ENCODE measurements at regions of chr6 and their contacts with region 1.

Region 1: DNA sequence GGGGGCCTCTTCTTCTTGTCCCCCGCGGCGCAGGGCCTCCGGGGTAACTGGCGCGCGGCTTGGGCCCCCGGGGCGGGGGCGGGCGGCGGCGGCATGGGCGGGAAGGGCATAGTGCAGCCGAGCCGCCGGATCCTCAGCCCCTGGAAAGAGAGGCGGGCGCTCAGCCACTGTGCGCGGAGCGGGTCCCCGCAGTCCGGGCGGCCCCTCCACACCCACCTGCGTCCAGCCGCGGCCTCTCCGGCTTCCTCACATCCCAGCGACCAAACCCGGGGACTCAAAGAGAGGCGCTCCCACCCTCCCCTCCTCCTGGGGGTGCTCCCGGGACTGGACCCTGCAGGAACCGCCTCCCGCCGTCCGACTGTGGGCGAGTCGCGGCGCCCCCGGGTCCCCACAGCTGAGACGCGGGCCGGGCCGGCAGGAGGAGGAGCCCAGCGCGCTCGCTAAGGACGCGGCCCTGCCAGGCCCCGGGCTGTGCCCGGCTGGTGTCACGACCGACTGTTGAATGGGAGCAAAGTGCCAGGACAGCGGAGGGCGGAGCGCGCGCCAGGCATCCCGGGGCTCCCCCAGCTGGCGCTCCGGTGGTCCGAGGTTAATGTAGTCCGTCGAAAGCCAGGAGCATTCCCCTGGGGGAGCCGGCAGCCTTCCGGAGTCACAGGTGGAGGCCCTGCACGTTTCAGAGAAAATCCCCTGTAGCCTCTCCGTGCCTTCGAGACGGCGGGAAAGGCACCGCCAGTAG is at the start of gene PRR18:
- DNase-seq: peak in 1 of 2 experiments; percentile 72
- H3K4me3 ChIP-seq: peak within 1 kb of the TSS; percentile 22 to 60 (median 44)
- H3K27ac ChIP-seq: no peak within 1 kb of the TSS
- H3K4me1 ChIP-seq: peaks cover 0 to 10% (median 4%) of the 10 kb centered on the region in 4 experiments; a peak in 4 of 7 replicates
- H3K27me3 ChIP-seq: peaks cover 24 to 54% (median 48%) of the 10 kb centered on the region in 4 experiments
- CTCF ChIP-seq: no peak
- EP300 ChIP-seq: no peak
- POLR2A ChIP-seq: no peak
- RAD21 ChIP-seq: no peak
- total RNA-seq, gene PRR18: 0.19 and 0.23 TPM in 2 replicates

Region 2: DNA sequence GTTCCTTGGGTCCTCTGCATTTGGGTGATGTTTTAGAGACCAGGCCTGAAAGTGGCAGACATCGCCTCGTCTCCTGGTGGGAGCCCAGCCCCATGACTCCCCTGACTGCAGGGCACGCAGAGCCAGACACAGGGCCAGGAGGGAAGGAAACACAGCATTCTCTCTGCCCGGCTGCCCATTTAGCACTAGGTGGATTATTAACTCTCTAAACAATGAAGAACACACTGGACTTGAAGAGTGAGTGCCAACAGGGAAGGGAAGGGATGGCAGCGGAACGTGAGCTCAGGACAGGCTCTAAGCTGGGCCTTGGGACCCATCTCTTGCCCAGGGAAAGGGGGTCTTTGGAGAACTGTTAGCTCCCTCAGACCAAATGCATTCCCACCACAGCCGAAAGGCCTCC is 221.0 kb before region 1 on chr6:
- CTCF ChIA-PET with region 1: no interaction called
- POLR2A ChIA-PET with region 1: no interaction called
- DNase-seq: no peak
- H3K4me3 ChIP-seq: no peak overlapping the region
- H3K27ac ChIP-seq: no peak overlapping the region
- H3K4me1 ChIP-seq: no peaks in the 10 kb centered on the region
- H3K27me3 ChIP-seq: peaks cover 0 to 4% (median 0%) of the 10 kb centered on the region in 4 experiments; a peak in 1 of 7 replicates
- CTCF ChIP-seq: no peak
- EP300 ChIP-seq: no peak
- POLR2A ChIP-seq: no peak
- RAD21 ChIP-seq: no peak

Region 3: DNA sequence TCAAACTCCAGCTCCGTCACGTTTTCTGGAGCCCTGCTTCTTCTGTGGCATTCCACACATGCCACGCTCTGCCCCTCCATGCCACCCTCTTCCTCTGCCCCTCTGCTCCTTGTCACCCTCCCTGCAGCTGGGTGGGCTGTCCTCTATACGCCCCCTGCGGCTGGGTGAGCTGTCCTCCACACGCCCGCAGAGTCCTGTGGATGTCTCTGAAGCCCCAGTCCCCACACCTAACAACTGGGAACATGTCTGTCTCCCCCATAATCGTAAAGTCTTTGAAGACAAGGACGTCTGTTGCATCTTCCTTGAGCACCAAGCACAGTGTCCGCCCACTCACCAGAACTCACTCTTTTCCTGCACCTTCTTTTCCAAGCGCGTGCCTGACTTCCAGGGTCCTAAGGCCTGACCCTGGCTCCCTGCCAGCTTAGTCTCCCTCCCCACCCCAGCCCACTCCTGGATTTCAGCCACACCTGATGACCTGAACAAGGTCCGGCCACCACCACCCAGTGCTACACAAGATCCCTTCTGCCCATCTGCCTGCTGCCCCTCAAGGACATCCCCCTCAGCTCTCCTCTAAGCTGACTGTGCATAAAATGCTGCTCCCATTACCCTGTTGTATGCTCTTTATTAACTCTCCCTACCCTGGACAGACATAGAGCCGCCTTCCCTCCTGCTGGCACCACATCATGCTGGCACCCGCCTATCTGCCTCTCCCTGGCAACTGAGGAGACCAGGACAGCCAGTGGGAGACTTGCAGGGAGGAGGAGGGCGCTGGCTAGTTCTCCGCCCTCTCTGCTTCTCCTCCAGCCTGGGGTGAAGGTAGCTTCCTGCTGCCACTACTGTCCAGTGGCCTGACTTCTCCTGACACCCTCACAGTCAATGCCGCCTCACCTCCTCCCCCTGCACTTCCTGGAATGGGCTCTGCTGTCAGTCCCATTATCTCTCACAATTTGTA is 10.7 kb after region 1 on chr6:
- CTCF ChIA-PET with region 1: interaction called, 27 read pairs
- POLR2A ChIA-PET with region 1: interaction called, 6 read pairs
- DNase-seq: no peak
- H3K4me3 ChIP-seq: no peak overlapping the region
- H3K27ac ChIP-seq: no peak overlapping the region
- H3K4me1 ChIP-seq: 0 out of 7 replicates have a peak, but pooled peaks cover 0 to 2% (median 0%) of the 10 kb centered on the region in 4 experiments
- H3K27me3 ChIP-seq: no peaks in the 10 kb centered on the region
- CTCF ChIP-seq: no peak
- EP300 ChIP-seq: no peak
- POLR2A ChIP-seq: no peak
- RAD21 ChIP-seq: no peak